ENCODE measurements at regions of chr1 and their contacts with region 1.

Region 1: DNA sequence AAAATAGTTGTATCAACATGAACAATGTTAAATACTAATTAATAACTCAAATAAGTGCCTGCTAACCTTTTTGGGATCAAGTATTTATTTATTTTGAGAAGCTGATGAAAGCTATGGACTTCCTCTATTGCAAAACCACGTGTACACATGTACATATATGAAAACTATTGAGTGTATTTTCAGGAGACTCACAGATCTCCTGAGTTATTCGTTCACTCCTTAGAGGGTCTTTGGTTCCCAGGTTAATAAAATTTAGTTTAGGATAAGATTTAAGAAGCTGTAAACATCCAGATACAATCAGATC is 130.5 kb downstream of the DISC1 start:
- DNase-seq: no peak
- ATAC-seq: peak; percentile 28
- H3K4me3 ChIP-seq: peak overlapping the region in 4 of 5 experiments; percentile 29 to 53 (median 38)
- H3K4me3 Mint-ChIP-seq: peak overlapping the region; percentile 59
- H3K27ac ChIP-seq: no peak overlapping the region
- H3K27ac Mint-ChIP-seq: no peak overlapping the region
- H3K4me1 ChIP-seq: no peaks in the 10 kb centered on the region
- H3K4me1 Mint-ChIP-seq: no peaks in the 10 kb centered on the region
- H3K27me3 ChIP-seq: no peaks in the 10 kb centered on the region
- H3K27me3 Mint-ChIP-seq: no peaks in the 10 kb centered on the region
- CTCF ChIP-seq: peak; percentile 66

Region 2: DNA sequence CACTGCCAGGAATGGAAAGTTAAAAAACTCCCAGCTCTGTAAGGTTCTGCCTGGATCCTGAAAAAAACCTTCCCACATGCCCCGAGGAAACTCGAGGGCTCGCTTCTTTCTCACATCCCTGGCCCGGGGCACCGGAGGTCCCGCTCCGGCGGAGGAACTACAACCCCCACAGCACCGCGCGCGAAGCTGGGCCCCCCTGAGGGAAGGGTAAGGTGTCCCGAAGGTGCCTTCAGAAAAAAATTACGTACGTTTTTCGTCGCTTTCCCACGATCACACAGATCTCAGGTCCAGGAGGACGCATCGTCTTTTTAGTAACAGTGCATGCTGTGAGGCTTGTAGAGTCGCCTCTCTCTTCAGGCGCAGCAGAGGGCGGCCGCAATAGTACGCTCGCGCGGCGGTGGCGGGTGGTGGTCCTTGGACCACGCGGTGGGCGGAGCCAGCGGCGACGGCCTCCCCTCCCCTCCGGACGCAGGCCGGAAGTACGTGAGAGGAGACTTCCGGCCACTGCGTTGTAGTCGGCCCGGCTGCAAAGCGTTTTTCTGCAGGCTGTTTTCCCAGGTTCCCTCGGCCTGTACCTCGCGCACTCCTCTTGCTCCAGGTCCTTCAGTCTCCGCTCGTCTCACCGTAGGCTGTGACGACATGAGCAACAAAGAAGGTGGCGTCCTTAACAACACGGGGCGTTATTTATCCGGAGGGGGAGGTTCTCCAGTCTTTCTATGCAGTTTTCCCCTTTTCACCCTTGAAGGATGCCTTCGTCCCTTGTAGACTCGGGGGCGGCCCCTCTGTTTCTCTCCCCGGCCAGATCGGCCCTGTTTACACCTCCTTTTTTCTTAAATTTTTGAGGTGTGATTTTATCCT is 228.7 kb before region 1 on chr1 and contains the start of gene TSNAX:
- CTCF ChIA-PET with region 1: no interaction called
- POLR2A ChIA-PET with region 1: no interaction called
- intact Hi-C with region 1: no loop called
- DNase-seq: peak; percentile 98
- ATAC-seq: peak; percentile 94
- H3K4me3 ChIP-seq: peak within 1 kb of the TSS; percentile 71 to 94 (median 91)
- H3K4me3 Mint-ChIP-seq: peak within 1 kb of the TSS; percentile 99
- H3K27ac ChIP-seq: peak within 1 kb of the TSS; percentile 90 to 99
- H3K27ac Mint-ChIP-seq: peak within 1 kb of the TSS; percentile 100
- H3K4me1 ChIP-seq: peaks cover 21 to 24% of the 10 kb centered on the region in 2 donors
- H3K4me1 Mint-ChIP-seq: peaks cover 32% of the 10 kb centered on the region
- H3K27me3 ChIP-seq: no peaks in the 10 kb centered on the region
- H3K27me3 Mint-ChIP-seq: no peaks in the 10 kb centered on the region
- CTCF ChIP-seq: no peak
- total RNA-seq, gene TSNAX: 34.8 and 41.4 TPM in 2 replicates

Region 3: GRCh38 chr1:231735411-231735810 is 21.6 kb before region 1 on chr1:
- CTCF ChIA-PET with region 1: interaction called, 11 read pairs
- POLR2A ChIA-PET with region 1: no interaction called
- intact Hi-C with region 1: no loop called
- DNase-seq: no peak
- ATAC-seq: no peak
- H3K4me3 ChIP-seq: no peak overlapping the region
- H3K4me3 Mint-ChIP-seq: no peak overlapping the region
- H3K27ac ChIP-seq: no peak overlapping the region
- H3K27ac Mint-ChIP-seq: no peak overlapping the region
- H3K4me1 ChIP-seq: no peaks in the 10 kb centered on the region
- H3K4me1 Mint-ChIP-seq: no peaks in the 10 kb centered on the region
- H3K27me3 ChIP-seq: no peaks in the 10 kb centered on the region
- H3K27me3 Mint-ChIP-seq: no peaks in the 10 kb centered on the region
- CTCF ChIP-seq: no peak

Region 4: GRCh38 chr1:231767471-231767870 is 10.4 kb after region 1 on chr1:
- CTCF ChIA-PET with region 1: interaction called, 19 read pairs
- POLR2A ChIA-PET with region 1: no interaction called
- intact Hi-C with region 1: no loop called
- DNase-seq: no peak
- ATAC-seq: no peak
- H3K4me3 ChIP-seq: no peak overlapping the region
- H3K4me3 Mint-ChIP-seq: no peak overlapping the region
- H3K27ac ChIP-seq: no peak overlapping the region
- H3K27ac Mint-ChIP-seq: no peak overlapping the region
- H3K4me1 ChIP-seq: no peaks in the 10 kb centered on the region
- H3K4me1 Mint-ChIP-seq: no peaks in the 10 kb centered on the region
- H3K27me3 ChIP-seq: no peaks in the 10 kb centered on the region
- H3K27me3 Mint-ChIP-seq: no peaks in the 10 kb centered on the region
- CTCF ChIP-seq: no peak

Region 5: DNA sequence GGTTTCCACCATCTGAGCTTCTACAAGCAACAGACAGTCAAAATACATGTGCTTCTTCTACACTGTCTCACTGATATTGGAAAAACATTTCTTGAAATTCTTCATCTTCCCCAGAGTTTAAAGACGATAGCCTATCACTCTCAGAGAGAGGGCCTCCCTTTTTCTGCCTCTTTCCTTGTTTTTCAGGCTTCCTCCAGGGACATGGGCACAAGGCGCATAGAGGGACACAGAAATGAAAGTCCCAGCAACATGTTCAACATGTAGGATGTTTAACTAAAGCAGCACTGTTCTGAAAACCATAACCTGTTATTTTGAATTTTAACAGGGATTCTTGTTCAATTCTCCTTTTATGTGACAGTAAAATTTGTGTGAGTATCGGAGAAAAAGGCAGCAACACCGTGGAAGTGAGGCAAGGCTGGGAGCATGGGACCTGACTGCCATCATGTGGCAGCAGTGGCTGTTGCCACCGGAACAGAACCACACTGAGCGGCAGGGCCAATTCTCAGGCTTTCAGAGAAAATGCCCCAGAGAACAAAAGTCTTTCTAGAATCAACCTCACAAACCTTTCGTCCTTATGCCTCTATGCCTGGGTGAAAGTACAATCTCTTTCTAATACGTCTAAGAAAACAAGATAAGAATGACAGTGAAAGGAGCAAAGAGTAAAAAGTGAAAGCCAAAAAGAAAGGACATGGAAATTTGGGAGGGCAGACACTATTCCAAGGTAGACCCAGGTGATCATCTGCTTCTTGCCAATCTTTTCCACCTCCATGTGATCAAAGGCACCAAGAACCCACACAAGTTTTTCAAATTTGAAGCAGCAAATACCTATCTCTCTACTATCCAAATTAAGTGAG is 1484.0 kb after region 1 on chr1:
- CTCF ChIA-PET with region 1: no interaction called
- POLR2A ChIA-PET with region 1: no interaction called
- intact Hi-C with region 1: loop called (anchors 5 kb)
- DNase-seq: peak; percentile 11
- ATAC-seq: no peak
- H3K4me3 ChIP-seq: no peak overlapping the region
- H3K4me3 Mint-ChIP-seq: no peak overlapping the region
- H3K27ac ChIP-seq: no peak overlapping the region
- H3K27ac Mint-ChIP-seq: no peak overlapping the region
- H3K4me1 ChIP-seq: no peaks in the 10 kb centered on the region
- H3K4me1 Mint-ChIP-seq: no peaks in the 10 kb centered on the region
- H3K27me3 ChIP-seq: no peaks in the 10 kb centered on the region
- H3K27me3 Mint-ChIP-seq: no peaks in the 10 kb centered on the region
- CTCF ChIP-seq: peak; percentile 29